Gastrocnemius medialis (tissue), 4 donors: ENCODE measurements at regions of chr5 and their contacts with region 1.

Region 1: GRCh38 chr5:59542851-59543820 is 350.4 kb downstream of the PDE4D start:
- DNase-seq: peak; percentile 79 to 93
- ATAC-seq: peak; percentile 84 to 87
- H3K4me3 ChIP-seq: peak overlapping the region in 1 of 4 donors; percentile 10
- H3K27ac ChIP-seq: peak overlapping the region; percentile 87 to 93 (median 91)
- H3K4me1 ChIP-seq: peaks cover 60 to 81% of the 10 kb centered on the region in 2 donors
- H3K27me3 ChIP-seq: no peaks in the 10 kb centered on the region
- CTCF ChIP-seq: no peak
- POLR2A ChIP-seq: peak in 1 of 2 donors; percentile 7

Region 2: DNA sequence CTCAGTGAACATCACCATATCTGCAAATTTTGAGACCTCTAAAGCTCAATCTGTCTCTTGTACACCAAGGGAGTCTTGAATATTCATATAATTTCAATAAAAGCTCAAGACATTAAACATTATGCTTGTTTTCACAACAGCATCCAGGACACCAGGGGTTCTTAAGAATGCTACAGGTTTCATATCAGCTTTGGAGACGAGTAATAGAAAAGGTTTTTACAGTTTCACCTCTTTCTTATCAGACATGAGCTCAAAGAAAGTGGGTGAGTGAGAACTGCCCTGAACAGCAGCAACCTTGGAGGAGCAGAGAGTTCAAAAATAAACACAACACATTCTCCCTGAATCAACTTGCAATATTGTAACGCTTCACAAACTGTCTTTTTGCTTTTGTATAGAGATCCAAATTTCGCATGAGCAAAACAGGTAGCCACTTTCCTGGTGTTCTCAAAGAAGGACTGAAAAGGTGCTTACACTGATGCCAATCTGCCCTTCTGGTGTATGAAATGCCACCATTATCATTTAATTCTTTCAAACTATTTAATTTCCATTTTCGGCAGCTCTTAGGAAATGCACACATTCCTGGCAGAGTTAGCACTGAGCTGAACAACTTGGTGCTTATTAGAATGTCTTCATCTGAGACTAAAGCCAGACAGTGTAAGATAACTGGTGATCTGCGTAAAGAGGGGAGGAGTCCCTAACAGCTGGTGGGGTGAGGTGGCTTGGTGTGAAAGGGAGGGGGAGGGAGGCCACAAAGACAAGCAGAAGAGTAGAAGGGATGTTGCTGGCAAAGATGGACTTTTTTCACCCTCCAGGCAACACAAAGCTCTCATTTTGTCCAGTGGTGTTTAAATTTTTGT is 184.9 kb before region 1 on chr5:
- in situ Hi-C with region 1: no loop called
- intact Hi-C with region 1: loop called (anchors 5 kb)
- DNase-seq: peak; percentile 64 to 66
- ATAC-seq: peak; percentile 67 to 68
- H3K4me3 ChIP-seq: peak overlapping the region; percentile 12 to 57 (median 53)
- H3K27ac ChIP-seq: peak overlapping the region; percentile 81 to 86 (median 83)
- H3K4me1 ChIP-seq: peaks cover 31 to 75% of the 10 kb centered on the region in 2 donors
- H3K27me3 ChIP-seq: no peaks in the 10 kb centered on the region
- CTCF ChIP-seq: no peak
- POLR2A ChIP-seq: peak; percentile 40 to 65

Region 3: GRCh38 chr5:59562756-59563389 is 19.7 kb after region 1 on chr5:
- in situ Hi-C with region 1: no loop called
- intact Hi-C with region 1: loop called (anchors 1 kb)
- DNase-seq: peak; percentile 92 to 96
- ATAC-seq: peak; percentile 84 to 86
- H3K4me3 ChIP-seq: no peak overlapping the region
- H3K27ac ChIP-seq: peak overlapping the region; percentile 87 to 93 (median 90)
- H3K4me1 ChIP-seq: peaks cover 67 to 94% of the 10 kb centered on the region in 2 donors
- H3K27me3 ChIP-seq: no peaks in the 10 kb centered on the region
- CTCF ChIP-seq: no peak
- POLR2A ChIP-seq: no peak

Region 4: GRCh38 chr5:59587489-59588337 is 44.6 kb after region 1 on chr5:
- in situ Hi-C with region 1: no loop called
- intact Hi-C with region 1: loop called (anchors 2 kb)
- DNase-seq: peak; percentile 71 to 88
- ATAC-seq: peak; percentile 53 to 68
- H3K4me3 ChIP-seq: peak overlapping the region; percentile 63 to 74 (median 67)
- H3K27ac ChIP-seq: peak overlapping the region; percentile 78 to 92 (median 88)
- H3K4me1 ChIP-seq: peaks cover 8 to 28% of the 10 kb centered on the region in 2 donors
- H3K27me3 ChIP-seq: no peaks in the 10 kb centered on the region
- CTCF ChIP-seq: peak in 2 of 5 experiments; percentile 8 to 42
- POLR2A ChIP-seq: peak; percentile 60 to 84

Region 5: GRCh38 chr5:59615272-59615671 is 72.1 kb after region 1 on chr5:
- in situ Hi-C with region 1: no loop called
- intact Hi-C with region 1: loop called (anchors 5 kb)
- DNase-seq: no peak
- ATAC-seq: no peak
- H3K4me3 ChIP-seq: no peak overlapping the region
- H3K27ac ChIP-seq: peak overlapping the region; percentile 86 to 93 (median 90)
- H3K4me1 ChIP-seq: peaks cover 16 to 54% of the 10 kb centered on the region in 2 donors
- H3K27me3 ChIP-seq: no peaks in the 10 kb centered on the region
- CTCF ChIP-seq: no peak
- POLR2A ChIP-seq: no peak